Breast epithelium (tissue), 4 donors: ENCODE measurements at regions of chr13 and their contacts with region 1.

Region 1: GRCh38 chr13:43684963-43685725 is 101.6 kb downstream of the ENOX1 start:
- DNase-seq: no peak
- H3K4me3 ChIP-seq: no peak overlapping the region
- H3K27ac ChIP-seq: no peak overlapping the region
- H3K4me1 ChIP-seq: no peaks in the 10 kb centered on the region
- H3K27me3 ChIP-seq: no peaks in the 10 kb centered on the region
- CTCF ChIP-seq: no peak
- POLR2A ChIP-seq: no peak

Region 2: GRCh38 chr13:44894001-44894780 is 1209.0 kb after region 1 on chr13:
- intact Hi-C with region 1: loop called (anchors 5 kb)
- DNase-seq: no peak
- H3K4me3 ChIP-seq: no peak overlapping the region
- H3K27ac ChIP-seq: no peak overlapping the region
- H3K4me1 ChIP-seq: no peaks in the 10 kb centered on the region
- H3K27me3 ChIP-seq: no peaks in the 10 kb centered on the region
- CTCF ChIP-seq: no peak
- POLR2A ChIP-seq: no peak